Heart right ventricle (tissue), 16 donors: ENCODE measurements at regions of chr6 and their contacts with region 1.

Region 1: DNA sequence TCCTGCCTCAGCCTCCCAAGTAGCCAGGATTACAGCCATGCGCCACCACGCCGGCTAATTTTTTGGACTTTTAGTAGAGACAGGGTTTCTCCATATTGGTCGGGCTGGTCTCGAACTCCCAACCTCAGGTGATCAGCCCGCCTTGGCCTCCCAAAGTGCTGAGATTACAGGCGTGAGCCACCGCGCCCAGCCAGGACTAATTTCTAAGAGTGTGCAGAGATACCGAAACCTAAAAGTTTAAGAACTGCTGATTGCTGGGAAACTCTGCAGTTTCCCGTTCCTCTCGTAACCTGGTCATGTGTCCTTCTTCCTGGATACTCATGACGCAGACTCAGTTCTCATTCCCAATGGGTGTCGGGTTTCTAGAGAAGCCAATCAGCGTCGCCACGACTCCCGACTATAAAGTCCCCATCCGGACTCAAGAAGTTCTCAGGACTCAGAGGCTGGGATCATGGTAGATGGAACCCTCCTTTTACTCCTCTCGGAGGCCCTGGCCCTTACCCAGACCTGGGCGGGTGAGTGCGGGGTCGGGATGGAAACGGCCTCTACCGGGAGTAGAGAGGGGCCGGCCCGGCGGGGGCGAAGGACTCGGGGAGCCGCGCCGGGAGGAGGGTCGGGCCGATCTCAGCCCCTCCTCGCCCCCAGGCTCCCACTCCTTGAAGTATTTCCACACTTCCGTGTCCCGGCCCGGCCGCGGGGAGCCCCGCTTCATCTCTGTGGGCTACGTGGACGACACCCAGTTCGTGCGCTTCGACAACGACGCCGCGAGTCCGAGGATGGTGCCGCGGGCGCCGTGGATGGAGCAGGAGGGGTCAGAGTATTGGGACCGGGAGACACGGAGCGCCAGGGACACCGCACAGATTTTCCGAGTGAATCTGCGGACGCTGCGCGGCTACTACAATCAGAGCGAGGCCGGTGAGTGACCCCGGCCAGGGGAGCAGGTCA is at the start of gene HLA-E:
- DNase-seq: peak; percentile 79 to 97
- ATAC-seq: peak; percentile 93 to 97 (median 96)
- H3K4me3 ChIP-seq: peak within 1 kb of the TSS; percentile 69 to 97 (median 88)
- H3K27ac ChIP-seq: peak within 1 kb of the TSS; percentile 93 to 100 (median 98)
- H3K4me1 ChIP-seq: peaks cover 0 to 52% (median 24%) of the 10 kb centered on the region in 9 donors
- H3K27me3 ChIP-seq: peaks cover 0 to 11% (median 0%) of the 10 kb centered on the region in 7 donors
- CTCF ChIP-seq: no peak
- total RNA-seq, gene HLA-E: 121 to 482 (median 155) TPM

Region 2: DNA sequence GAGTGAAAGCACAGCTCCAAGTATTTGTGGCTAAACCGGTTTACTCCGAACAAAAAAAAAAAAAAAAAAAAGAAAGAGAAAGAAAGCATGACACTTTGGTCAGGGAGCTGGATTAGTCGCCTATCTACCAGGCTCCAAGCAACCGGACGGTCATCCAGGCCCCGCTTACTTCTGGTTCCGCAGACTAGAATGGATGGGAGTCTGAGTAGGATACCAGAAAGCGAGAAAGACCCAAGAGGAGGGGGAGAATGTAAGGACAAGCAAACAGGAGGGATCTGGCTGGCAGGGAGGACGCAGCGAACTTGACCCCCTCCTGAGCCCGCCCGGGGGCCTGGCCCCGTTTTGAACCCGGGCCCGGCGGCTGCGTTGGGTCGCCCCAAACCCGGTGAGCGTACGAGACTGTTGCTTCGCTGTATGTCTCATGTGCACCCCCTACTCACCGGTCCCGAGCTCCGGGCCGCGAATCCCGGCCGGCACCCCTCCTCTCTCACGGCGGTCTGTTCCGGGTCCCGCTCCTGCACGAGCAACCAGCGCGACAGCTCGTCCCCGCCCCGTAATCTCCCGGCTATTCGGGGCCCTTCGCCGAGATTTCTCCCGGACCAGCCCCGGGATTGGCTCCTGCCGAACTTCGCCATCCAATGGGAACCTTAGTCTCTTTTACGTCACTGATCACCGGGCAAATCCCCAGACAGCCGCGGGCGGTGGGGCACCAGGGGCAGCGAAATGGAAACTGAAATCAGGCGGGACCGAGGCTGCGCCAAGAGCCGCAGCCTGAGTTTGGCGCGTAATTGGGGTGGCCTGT is 276.3 kb before region 1 on chr6 and contains the start of gene TRIM26:
- intact Hi-C with region 1: no loop called
- DNase-seq: peak; percentile 96 to 98
- ATAC-seq: peak; percentile 95 to 98 (median 96)
- H3K4me3 ChIP-seq: peak within 1 kb of the TSS; percentile 68 to 91 (median 82)
- H3K27ac ChIP-seq: peak within 1 kb of the TSS; percentile 82 to 97 (median 94)
- H3K4me1 ChIP-seq: peaks cover 0 to 47% (median 30%) of the 10 kb centered on the region in 9 donors
- H3K27me3 ChIP-seq: no peaks in the 10 kb centered on the region
- CTCF ChIP-seq: no peak
- total RNA-seq, gene TRIM26: 15.5 to 29.0 (median 23.2) TPM

Region 3: DNA sequence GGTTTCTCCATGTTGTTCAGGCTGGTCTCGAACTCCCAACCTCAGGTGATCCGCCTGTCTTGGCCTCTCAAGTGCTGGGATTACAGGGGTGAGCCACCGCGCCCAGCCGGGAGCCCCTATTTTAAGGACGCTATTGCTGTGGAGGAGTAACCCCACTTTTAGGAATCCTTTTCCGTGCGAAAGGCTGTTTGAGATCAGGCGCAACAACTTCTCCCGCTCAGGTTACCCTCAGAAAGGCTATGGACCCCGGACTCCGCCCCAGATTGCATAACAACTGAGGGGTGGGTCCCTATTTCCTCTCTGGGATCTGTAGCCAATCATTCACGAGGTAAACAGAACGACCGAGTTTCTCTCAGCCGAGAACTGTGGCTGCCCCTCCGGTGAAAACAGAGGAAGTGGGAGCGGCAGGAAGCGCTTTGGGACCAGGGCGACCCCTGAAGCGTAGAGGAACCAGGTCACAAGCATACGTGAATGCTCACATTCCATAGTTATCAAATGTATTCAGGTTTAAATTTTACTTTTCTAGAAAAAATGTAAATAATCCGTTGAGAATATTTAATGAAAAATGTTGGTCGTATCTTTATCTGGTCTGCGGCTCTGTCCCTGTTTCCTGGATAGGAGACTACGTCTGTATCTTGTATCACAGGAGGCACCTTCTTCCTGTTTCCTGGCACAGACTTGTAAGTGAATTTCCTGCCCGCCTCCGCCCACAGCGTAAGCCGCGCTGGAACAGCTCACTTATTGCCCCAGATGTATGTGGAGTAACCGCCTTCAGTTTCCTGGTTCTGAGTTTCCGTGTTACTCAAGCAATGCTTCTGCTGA is 26.8 kb after region 1 on chr6:
- intact Hi-C with region 1: loop called in 1 of 10 experiments (anchors 1 kb)
- DNase-seq: peak; percentile 84 to 94
- ATAC-seq: peak; percentile 94 to 98 (median 96)
- H3K4me3 ChIP-seq: peak overlapping the region; percentile 23 to 65 (median 48)
- H3K27ac ChIP-seq: peak overlapping the region; percentile 71 to 98 (median 92)
- H3K4me1 ChIP-seq: peaks cover 0 to 29% (median 7%) of the 10 kb centered on the region in 9 donors
- H3K27me3 ChIP-seq: no peaks in the 10 kb centered on the region
- CTCF ChIP-seq: no peak

Region 4: DNA sequence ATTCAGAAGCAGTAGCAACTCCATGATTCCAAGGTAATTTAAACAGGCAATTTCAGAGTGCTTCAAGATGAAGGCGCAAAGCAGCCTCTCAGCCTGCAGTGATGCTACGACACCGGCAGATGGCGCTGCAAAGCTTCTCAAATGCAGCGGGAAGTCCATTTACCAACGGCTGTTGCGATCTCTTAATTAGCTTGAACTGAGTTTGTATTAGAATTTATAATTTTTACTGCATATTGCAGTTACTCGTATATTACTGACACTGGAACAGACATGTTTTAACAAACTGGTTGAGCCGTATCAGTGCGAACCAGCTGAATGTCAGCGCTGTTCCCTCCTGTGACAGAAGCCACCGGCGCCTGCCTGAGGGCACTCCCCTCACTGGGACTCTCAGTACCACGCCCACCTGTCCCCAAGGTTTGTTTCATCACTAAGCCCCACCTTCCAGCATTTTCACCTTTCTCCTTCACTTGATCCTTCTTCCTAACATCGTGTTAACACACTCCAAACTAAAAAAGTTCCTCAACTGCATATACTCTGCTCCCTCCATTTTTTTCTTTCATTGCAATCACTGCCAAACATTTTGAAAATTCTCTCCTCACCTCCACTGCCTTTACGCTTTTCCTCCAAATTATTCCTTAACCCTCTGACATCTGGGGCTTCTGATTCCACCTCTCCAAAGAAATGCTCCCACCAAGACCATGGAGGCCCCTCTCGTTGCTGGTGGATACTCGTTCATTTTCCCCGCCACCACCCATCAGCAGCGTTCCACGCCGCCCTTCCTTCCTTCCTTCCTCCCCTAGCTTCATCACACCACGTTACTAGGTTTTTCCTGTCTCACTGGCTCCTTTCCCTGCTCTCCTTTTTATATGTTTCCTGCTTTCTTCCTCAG is 52.4 kb after region 1 on chr6:
- intact Hi-C with region 1: loop called in 2 of 10 experiments (anchors 5 kb)
- DNase-seq: peak; percentile 63 to 73
- ATAC-seq: peak; percentile 57 to 84 (median 78)
- H3K4me3 ChIP-seq: peak overlapping the region in 9 of 10 donors; percentile 14 to 52 (median 41)
- H3K27ac ChIP-seq: peak overlapping the region; percentile 13 to 71 (median 64)
- H3K4me1 ChIP-seq: peaks cover 3 to 27% (median 17%) of the 10 kb centered on the region in 9 donors
- H3K27me3 ChIP-seq: peaks cover 0 to 7% (median 0%) of the 10 kb centered on the region in 7 donors
- CTCF ChIP-seq: peak; percentile 93 to 99 (median 99)

Region 5: GRCh38 chr6:30600451-30600961 is 111.2 kb after region 1 on chr6:
- intact Hi-C with region 1: loop called in 6 of 10 experiments (anchors 2 to 10 kb)
- DNase-seq: peak; percentile 33 to 43
- ATAC-seq: peak in 2 of 8 donors; percentile 10 to 11
- H3K4me3 ChIP-seq: no peak overlapping the region
- H3K27ac ChIP-seq: no peak overlapping the region
- H3K4me1 ChIP-seq: peaks cover 0 to 15% (median 0%) of the 10 kb centered on the region in 9 donors
- H3K27me3 ChIP-seq: no peaks in the 10 kb centered on the region
- CTCF ChIP-seq: no peak

Region 6: GRCh38 chr6:30717042-30717844 is 227.9 kb after region 1 on chr6 and contains the start of gene MDC1:
- intact Hi-C with region 1: loop called in 1 of 10 experiments (anchors 10 kb)
- DNase-seq: peak; percentile 99 to 100
- ATAC-seq: peak; percentile 83 to 93 (median 86)
- H3K4me3 ChIP-seq: peak within 1 kb of the TSS; percentile 57 to 92 (median 69)
- H3K27ac ChIP-seq: peak within 1 kb of the TSS; percentile 76 to 99 (median 94)
- H3K4me1 ChIP-seq: peaks cover 5 to 39% (median 36%) of the 10 kb centered on the region in 9 donors
- H3K27me3 ChIP-seq: no peaks in the 10 kb centered on the region
- CTCF ChIP-seq: peak; percentile 7 to 52 (median 44)
- total RNA-seq, gene MDC1: 15.3 to 21.7 (median 19.5) TPM